ENCODE measurements at regions of chr3 and their contacts with region 1.

Region 1: GRCh38 chr3:7982126-7982525 is 519.5 kb upstream of the LMCD1 start:
- DNase-seq: no peak
- H3K4me3 ChIP-seq: no peak overlapping the region
- H3K27ac ChIP-seq: no peak overlapping the region
- H3K4me1 ChIP-seq: no peaks in the 10 kb centered on the region
- H3K27me3 ChIP-seq: no peaks in the 10 kb centered on the region
- CTCF ChIP-seq: no peak
- EP300 ChIP-seq: no peak
- POLR2A ChIP-seq: no peak

Region 2: GRCh38 chr3:7953449-7954015 is 28.6 kb before region 1 on chr3:
- intact Hi-C with region 1: loop called in 1 of 4 experiments (anchors 1 kb)
- DNase-seq: no peak
- H3K4me3 ChIP-seq: no peak overlapping the region
- H3K27ac ChIP-seq: no peak overlapping the region
- H3K4me1 ChIP-seq: no peaks in the 10 kb centered on the region
- H3K27me3 ChIP-seq: no peaks in the 10 kb centered on the region
- CTCF ChIP-seq: no peak
- EP300 ChIP-seq: no peak
- POLR2A ChIP-seq: no peak

Region 3: DNA sequence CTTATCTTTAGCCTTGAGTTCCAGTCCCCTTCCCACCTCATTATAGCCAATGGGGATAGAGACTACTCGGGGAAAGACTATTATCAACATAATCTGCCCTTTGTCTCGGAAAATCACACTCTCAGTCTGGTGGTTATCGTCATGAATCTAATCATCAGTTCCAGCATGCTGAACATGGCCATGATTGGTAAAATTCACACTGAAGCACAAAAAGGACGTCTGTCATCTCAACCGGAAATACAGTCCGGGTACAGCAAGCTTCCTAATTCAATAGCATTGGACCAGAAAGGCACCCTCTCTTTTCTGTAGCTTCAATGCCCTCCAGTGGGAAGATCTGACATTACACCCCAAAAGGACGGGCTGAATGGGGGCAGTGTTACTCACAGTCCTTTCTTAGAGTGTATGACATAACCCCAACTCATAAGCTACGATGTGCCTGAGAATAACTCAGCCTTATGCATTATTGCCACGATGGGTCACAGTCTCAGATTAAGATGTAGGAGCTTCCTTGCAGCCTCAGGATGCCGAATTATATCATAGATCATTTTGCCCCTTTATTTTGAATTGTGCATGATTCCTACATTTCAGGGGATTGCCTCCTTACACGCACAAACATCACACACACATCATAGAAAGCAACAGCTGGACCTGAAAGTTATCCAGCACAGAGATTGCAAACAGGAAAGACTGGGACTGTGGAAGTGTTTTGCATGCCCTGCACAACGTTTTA is 129.1 kb after region 1 on chr3:
- intact Hi-C with region 1: no loop called
- DNase-seq: peak; percentile 11 to 51 (median 38)
- H3K4me3 ChIP-seq: no peak overlapping the region
- H3K27ac ChIP-seq: no peak overlapping the region
- H3K4me1 ChIP-seq: no peaks in the 10 kb centered on the region
- H3K27me3 ChIP-seq: no peaks in the 10 kb centered on the region
- CTCF ChIP-seq: peak; percentile 18 to 66 (median 28)
- EP300 ChIP-seq: no peak
- POLR2A ChIP-seq: no peak